ENCODE measurements at regions of chr16 and their contacts with region 1.

Region 1: DNA sequence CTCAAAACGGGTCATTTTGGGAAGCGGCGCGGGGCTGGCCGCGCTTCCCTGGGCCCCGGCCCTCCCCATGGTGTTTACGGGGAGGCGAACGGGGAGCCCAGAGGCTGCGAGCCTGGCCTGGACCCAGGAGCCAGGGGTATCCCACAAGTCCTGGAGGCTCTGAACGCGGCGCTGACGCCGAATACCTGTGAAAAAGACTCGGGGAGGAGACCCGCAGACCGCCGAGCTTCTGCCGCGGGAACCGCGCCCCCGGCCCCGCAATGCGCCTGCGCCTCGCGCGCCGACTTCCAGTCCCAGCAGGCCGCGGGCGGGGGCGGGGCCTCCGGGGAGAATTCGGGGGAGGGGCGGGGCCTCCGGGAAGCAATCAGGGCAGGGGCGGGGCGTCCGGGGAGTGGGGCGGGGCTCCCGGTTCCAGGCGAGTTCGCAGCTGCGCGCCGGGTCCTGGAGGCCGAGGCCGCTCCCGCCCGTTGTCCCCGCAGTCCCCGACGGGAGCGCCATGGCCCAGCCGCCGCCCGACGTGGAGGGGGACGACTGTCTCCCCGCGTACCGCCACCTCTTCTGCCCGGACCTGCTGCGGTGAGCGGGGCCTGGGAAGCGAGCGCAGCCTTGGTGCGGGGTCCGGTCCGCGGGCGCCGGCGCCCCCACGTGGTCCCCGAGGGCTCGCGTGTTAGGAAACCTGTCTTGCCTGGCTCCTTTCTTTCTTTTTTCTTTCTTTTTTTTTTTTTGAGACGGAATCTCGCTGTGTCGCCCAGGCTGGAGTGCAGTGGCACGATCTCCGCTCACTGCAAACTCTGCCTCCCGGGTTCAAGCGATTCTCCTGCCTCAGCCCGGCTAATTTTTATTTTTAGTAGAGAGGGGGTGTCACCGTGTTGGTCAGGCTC is at the start of gene DECR2:
- DNase-seq: no peak
- ATAC-seq: peak; percentile 69
- H3K4me3 ChIP-seq: peak within 1 kb of the TSS; percentile 67 to 81
- H3K27ac ChIP-seq: peak within 1 kb of the TSS; percentile 94
- H3K4me1 ChIP-seq: peaks cover 34% of the 10 kb centered on the region
- H3K27me3 ChIP-seq: no peaks in the 10 kb centered on the region
- CTCF ChIP-seq: peak; percentile 89; the same call in 1 of the 2 replicates
- total RNA-seq, gene DECR2: 92.7 TPM

Region 2: DNA sequence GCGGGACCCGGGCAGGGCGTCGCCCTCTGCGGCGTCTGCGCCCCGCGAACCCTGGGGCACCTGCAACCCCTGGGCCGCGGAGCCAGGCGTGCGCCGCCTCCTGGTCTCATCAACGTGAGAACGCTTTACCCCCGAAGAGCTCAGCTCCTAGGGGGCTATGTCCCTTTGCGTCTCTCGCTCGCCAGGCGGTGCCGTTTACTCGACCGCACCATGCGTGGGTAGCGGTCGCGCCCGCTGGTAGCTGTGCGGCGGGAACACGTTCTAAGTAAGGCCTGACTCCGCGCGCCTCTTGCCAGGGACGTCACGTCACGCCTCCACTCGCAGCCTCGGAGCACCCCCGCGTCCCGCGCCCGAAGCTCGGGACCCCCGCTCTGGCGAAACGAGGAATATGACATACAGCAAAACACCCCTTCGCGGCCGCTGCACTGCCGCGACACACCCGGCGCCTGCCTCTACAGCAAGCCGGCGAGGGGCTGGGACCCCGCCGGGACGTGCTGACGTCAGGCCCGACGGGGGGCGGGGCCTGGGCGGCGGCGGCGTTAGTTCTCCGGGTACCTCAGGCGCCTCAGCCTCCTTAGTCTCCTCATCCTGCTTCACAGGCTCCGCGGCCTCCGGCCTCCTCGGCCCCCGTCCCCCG is 23.5 kb after region 1 on chr16 and contains the start of gene RAB11FIP3:
- CTCF ChIA-PET with region 1: no interaction called
- POLR2A ChIA-PET with region 1: interaction called, 9 read pairs
- in situ Hi-C with region 1: no loop called
- intact Hi-C with region 1: loop called (anchors 2 kb)
- DNase-seq: peak; percentile 24
- ATAC-seq: peak; percentile 95
- H3K4me3 ChIP-seq: peak within 1 kb of the TSS; percentile 73 to 77
- H3K27ac ChIP-seq: peak within 1 kb of the TSS; percentile 88
- H3K4me1 ChIP-seq: peaks cover 28% of the 10 kb centered on the region
- H3K27me3 ChIP-seq: no peaks in the 10 kb centered on the region
- CTCF ChIP-seq: no peak
- total RNA-seq, gene RAB11FIP3: 57.3 TPM

Region 3: DNA sequence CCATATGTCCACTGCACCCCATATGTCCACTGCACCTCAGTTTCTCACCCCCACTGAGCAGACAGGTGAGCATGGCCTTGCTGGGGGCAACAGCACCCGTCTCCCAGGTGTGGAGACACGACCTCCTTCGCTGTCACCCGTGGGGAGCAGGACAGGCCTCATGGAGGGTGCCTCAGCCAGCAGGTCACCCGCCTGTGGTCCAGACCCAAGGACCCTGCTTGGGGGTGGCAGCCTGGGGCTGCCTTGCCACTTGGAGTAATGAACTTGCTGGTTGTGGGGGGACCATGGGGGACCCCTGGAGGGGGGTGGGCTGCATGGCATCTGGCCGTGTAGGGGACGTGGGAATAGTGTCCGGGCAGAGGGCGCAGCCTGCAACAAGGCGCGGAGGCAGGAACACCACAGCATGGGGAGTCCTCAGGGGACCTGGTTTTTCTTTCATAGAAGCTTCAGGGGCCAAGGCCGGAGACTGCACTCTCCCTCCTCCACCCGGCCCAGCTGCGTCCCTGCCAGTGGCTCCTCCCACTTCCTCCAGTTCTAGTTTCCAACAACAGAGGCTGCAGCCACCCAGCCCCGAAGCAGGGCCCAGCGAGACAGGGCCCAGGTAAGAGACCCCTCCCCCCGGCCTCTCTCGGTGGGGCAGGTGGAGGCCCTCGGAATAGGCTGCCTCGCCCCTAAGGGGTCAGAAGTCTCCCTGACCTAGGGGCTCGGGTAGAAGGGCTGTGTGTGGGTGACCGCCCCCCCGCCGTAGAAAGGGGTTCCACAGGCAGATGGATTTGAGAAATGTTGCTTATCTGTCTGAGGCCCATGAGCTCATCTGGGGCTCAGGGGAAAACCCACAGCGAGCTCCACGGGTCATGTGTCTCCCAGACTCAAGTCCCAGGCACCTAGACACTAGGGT is 165.0 kb after region 1 on chr16 and contains the start of gene NHLRC4:
- CTCF ChIA-PET with region 1: no interaction called
- POLR2A ChIA-PET with region 1: interaction called, 13 read pairs
- in situ Hi-C with region 1: no loop called
- intact Hi-C with region 1: no loop called
- DNase-seq: no peak
- ATAC-seq: peak; percentile 35
- H3K4me3 ChIP-seq: peak within 1 kb of the TSS in 1 of 2 experiments; percentile 18; a peak in 2 of 4 replicates
- H3K27ac ChIP-seq: peak within 1 kb of the TSS; percentile 93
- H3K4me1 ChIP-seq: peaks cover 57% of the 10 kb centered on the region
- H3K27me3 ChIP-seq: no peaks in the 10 kb centered on the region
- CTCF ChIP-seq: no peak
- total RNA-seq, gene NHLRC4: 4.0 TPM

Region 4: GRCh38 chr16:877991-878784 is 476.5 kb after region 1 on chr16:
- CTCF ChIA-PET with region 1: no interaction called
- POLR2A ChIA-PET with region 1: no interaction called
- in situ Hi-C with region 1: no loop called
- intact Hi-C with region 1: no loop called
- DNase-seq: no peak
- ATAC-seq: peak; percentile 36
- H3K4me3 ChIP-seq: no peak overlapping the region
- H3K27ac ChIP-seq: no peak overlapping the region
- H3K4me1 ChIP-seq: no peaks in the 10 kb centered on the region
- H3K27me3 ChIP-seq: no peaks in the 10 kb centered on the region
- CTCF ChIP-seq: no peak